ENCODE measurements at regions of chr1 and their contacts with region 1.

Region 1: DNA sequence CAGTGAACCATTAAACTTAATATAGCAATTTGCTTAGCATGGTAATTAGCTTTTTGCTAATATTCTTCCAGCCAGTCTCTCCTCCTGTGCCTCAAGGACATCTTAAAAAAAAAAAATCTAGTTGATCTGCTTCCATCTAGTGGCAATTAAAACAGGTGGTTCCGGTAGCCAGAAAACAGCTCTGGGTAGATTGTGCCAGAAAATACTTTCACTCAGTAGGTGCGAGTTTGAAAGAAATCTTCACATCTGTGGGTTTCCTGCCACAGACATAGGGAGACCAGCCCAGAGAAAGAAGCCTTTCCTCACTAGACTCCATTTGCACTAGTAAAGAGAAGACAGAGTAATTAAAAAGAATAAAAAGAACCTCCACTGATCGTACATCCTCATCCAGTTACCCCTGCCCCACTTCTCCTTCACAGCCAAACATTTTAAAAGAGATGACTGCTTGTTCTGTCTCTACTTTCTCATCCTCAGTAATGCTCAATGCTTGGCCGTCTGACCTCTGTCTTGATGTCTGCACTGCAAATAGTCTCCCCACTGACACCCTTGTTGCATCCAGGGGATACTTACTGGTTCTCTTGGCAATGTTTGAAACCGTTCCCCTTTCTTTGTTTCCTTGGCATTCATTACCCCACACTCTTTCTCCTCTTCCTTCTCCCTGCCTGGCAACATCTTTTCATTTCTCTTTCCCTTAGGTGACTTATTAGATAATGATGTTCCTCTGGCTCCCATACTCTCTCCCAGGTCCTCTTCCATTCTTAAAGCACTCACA is 16.9 kb downstream of the SELL start:
- DNase-seq: peak; percentile 56
- H3K4me3 Mint-ChIP-seq: peak overlapping the region; percentile 28
- H3K27ac Mint-ChIP-seq: peak overlapping the region; percentile 90
- H3K4me1 Mint-ChIP-seq: peaks cover 96% of the 10 kb centered on the region
- H3K27me3 Mint-ChIP-seq: no peaks in the 10 kb centered on the region

Region 2: GRCh38 chr1:169670836-169671235 is 23.7 kb before region 1 on chr1:
- intact Hi-C with region 1: loop called (anchors 1 kb)
- DNase-seq: no peak
- H3K4me3 Mint-ChIP-seq: no peak overlapping the region
- H3K27ac Mint-ChIP-seq: peak overlapping the region; percentile 41
- H3K4me1 Mint-ChIP-seq: peaks cover 49% of the 10 kb centered on the region
- H3K27me3 Mint-ChIP-seq: no peaks in the 10 kb centered on the region

Region 3: GRCh38 chr1:169680377-169681019 is 14.0 kb before region 1 on chr1:
- intact Hi-C with region 1: loop called (anchors 1 kb)
- DNase-seq: no peak
- H3K4me3 Mint-ChIP-seq: peak overlapping the region; percentile 3
- H3K27ac Mint-ChIP-seq: peak overlapping the region; percentile 81
- H3K4me1 Mint-ChIP-seq: peaks cover 67% of the 10 kb centered on the region
- H3K27me3 Mint-ChIP-seq: no peaks in the 10 kb centered on the region

Measured in activated T-helper 1 cell treated with anti-CD3 and anti-CD28 coated beads, Interleukin-12 subunit alpha, Interleukin-12 subunit beta, Interleukin-2, Interleukin-4 antibody, amounts not matched to agents 30 ng/mL and 10 ng/mL and 1 ng/mL, durations not matched to agents 14 hours and 24 hours and 36 hours (primary cell).